HEK293 (cell line): ENCODE measurements at regions of chr6 and their contacts with region 1.

Region 1: GRCh38 chr6:30616811-30617564 is at the start of gene PPP1R10:
- H3K4me3 ChIP-seq: peak within 1 kb of the TSS; percentile 91
- H3K27ac ChIP-seq: peak within 1 kb of the TSS; percentile 88
- H3K4me1 ChIP-seq: peaks cover 18% of the 10 kb centered on the region
- CTCF ChIP-seq: 0 out of 2 replicates have a peak, but pooled peaks have one; percentile 17

Region 2: GRCh38 chr6:30556066-30556905 is 60.7 kb before region 1 on chr6 and contains the start of gene GNL1:
- CTCF ChIA-PET with region 1: interaction called, 4 read pairs
- POLR2A ChIA-PET with region 1: interaction called, 14 read pairs
- H3K4me3 ChIP-seq: peak within 1 kb of the TSS; percentile 86
- H3K27ac ChIP-seq: peak within 1 kb of the TSS; percentile 74
- H3K4me1 ChIP-seq: 0 out of 2 replicates have a peak, but pooled peaks cover 3% of the 10 kb centered on the region
- CTCF ChIP-seq: peak; percentile 62

Region 3: DNA sequence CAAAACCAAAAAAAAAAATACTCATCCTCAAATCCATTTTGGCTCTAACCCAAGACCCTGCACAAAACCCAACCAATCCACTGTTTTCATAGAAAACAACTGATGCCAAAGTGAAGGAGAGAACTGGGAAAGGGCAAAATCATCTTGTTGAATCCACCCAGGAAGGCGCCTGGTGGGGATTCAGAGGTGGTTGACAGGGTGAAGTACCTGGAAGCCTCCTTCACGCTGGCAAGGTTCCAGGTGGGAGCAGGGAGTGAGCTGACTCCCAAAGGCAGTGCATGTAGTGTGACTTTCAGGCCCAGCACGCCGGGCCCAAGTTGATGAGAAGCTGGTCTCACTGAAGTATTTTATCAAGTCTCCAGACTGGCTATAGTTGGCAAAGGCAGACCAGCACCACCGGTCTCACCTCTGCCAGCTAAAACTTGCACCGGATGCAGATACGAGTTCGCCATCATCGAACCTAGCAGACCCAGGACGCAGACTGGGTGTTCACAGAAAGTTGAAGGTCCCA is 16.5 kb before region 1 on chr6:
- CTCF ChIA-PET with region 1: interaction called, 29 read pairs
- POLR2A ChIA-PET with region 1: interaction called, 197 read pairs
- H3K4me3 ChIP-seq: no peak overlapping the region
- H3K27ac ChIP-seq: peak overlapping the region; percentile 40; the same call in 1 of the 2 replicates
- H3K4me1 ChIP-seq: no peaks in the 10 kb centered on the region
- CTCF ChIP-seq: no peak

Region 4: DNA sequence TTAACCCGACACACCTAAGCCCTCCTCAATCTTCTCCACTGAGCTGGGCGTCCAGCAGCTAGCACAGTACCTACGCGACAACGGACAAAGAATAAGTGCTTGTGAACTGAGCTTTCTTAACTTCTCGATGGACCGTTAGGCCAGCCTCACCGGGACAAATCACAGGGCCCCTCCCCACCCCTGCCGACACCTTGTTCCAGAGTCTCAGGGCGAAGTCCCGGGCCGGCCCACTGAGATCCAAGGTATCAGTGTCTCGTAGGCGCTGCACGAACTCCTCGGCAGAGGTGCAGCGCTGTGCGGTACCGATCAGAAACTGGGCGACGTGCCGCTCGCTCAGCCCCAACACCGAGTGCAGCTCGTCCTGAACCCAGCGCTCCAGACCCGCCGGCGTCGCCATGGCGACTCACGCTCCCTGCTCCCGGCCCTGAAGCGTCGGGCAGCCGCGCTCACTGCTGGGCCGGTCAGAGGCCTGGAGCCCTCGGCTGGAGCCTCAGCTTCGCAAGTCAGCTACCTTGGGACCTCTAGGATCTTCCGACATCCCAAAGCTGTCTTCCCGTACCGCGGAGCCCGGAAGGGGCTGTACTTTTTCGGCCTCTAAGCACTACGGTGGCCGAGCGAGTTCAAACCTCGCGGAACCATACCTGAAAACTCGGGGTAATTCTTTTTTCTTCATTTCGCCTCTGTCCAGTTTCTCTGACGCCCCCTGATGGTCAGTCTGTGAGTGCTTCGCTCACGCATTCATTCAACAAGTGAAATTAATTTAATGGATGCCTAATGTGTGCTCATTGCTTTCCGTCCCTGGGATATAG is 55.7 kb after region 1 on chr6 and contains the start of gene DHX16:
- CTCF ChIA-PET with region 1: interaction called, 3 read pairs
- POLR2A ChIA-PET with region 1: interaction called, 39 read pairs
- H3K4me3 ChIP-seq: peak within 1 kb of the TSS; percentile 60
- H3K27ac ChIP-seq: peak within 1 kb of the TSS; percentile 54; the same call in 1 of the 2 replicates
- H3K4me1 ChIP-seq: 0 out of 2 replicates have a peak, but pooled peaks cover 3% of the 10 kb centered on the region
- CTCF ChIP-seq: peak; percentile 81; the same call in 1 of the 2 replicates

Region 5: DNA sequence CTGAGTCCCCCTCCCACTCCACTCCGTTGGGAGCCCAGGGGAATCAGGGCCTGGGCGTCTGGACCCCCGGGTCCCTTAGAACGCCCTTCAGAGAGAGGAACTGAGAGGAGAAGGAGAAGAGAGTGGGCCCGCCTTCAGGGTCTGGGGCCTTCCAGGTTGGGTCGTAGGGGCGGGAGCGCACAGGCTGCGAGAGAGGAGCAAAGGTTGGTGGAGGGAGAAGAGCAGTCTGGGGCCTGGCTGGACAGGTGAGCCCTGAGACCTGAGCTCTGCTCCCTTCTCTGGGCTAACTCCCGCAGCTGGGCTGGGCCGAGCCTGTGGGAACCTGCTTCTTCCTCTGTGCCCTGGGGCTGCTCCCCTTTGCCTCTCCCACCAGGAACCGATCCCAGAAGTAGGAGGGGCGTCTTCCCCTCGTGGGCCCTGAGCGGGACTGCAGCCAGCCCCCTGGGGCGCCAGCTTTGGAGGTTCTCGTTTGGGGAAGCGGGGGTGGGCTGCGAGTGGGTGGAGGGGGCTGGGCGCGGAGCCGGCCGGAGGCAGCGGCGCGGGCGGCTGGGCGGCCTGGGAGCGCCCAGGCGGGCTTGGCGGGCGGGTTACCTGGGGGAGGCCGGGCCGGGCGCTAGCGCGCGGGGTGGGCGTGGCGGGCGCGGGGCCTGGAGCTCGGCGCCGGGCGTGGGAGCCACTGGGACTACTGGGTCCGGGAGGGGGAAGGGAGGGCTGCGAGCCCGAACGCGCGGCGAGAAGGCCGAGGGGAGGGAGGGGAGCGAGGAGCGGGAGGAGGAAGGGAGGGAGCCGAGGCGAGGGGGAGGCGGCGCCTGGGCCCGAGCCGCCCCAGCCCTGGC is 266.9 kb after region 1 on chr6 and contains the start of gene DDR1:
- CTCF ChIA-PET with region 1: no interaction called
- POLR2A ChIA-PET with region 1: interaction called, 10 read pairs
- H3K4me3 ChIP-seq: peak within 1 kb of the TSS; percentile 47
- H3K27ac ChIP-seq: peak within 1 kb of the TSS; percentile 69
- H3K4me1 ChIP-seq: peaks cover 35% of the 10 kb centered on the region
- CTCF ChIP-seq: no peak